Testis (tissue), 5 donors: ENCODE measurements at regions of chr20 and their contacts with region 1.

Region 1: GRCh38 chr20:1965520-1966351 is 28.1 kb downstream of the PDYN start:
- DNase-seq: peak; percentile 90
- H3K4me3 ChIP-seq: no peak overlapping the region
- H3K27ac ChIP-seq: no peak overlapping the region
- H3K4me1 ChIP-seq: peaks cover 5% of the 10 kb centered on the region
- H3K27me3 ChIP-seq: no peaks in the 10 kb centered on the region
- CTCF ChIP-seq: peak; percentile 82 to 96 (median 91)
- POLR2A ChIP-seq: no peak

Region 2: DNA sequence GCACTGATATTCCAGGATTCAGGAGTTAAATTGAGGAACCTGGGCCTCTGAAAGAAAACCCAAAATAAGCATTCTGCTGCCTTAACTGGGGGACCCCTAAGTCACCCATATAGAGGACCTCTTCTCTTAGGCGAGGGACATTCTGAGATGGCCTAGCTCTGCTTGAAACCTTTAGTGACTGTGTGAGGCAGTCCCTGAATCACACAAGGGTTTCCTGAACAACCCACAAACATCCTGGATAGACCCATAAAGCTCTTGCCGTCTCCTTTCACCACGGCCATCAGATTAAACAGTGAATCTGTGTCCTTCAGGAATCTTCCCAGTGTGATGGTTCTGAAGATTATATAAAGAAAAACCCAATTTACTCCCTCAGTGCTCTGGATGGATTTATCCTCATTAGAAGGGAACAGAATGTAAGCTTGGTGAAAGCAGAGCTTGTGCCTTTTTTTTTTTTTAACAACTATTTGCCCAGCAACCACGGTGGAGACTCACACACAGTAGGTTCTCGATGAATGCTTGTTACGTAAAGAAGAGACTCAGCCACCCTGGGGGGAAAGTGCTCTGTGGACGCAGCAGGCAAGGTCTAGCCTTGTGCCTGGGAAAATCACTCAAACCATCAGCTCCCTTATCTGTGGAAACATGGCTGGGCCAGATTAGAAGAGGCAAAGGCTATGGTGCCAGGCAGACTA is 269.1 kb before region 1 on chr20:
- intact Hi-C with region 1: no loop called
- DNase-seq: no peak
- H3K4me3 ChIP-seq: no peak overlapping the region
- H3K27ac ChIP-seq: no peak overlapping the region
- H3K4me1 ChIP-seq: no peaks in the 10 kb centered on the region
- H3K27me3 ChIP-seq: no peaks in the 10 kb centered on the region
- CTCF ChIP-seq: no peak
- POLR2A ChIP-seq: no peak

Region 3: GRCh38 chr20:2169456-2170088 is 203.8 kb after region 1 on chr20:
- intact Hi-C with region 1: loop called (anchors 5 kb)
- DNase-seq: no peak
- H3K4me3 ChIP-seq: no peak overlapping the region
- H3K27ac ChIP-seq: no peak overlapping the region
- H3K4me1 ChIP-seq: no peaks in the 10 kb centered on the region
- H3K27me3 ChIP-seq: no peaks in the 10 kb centered on the region
- CTCF ChIP-seq: no peak
- POLR2A ChIP-seq: no peak